Activated CD4-positive, alpha-beta memory T cell treated with anti-CD3 and anti-CD28 coated beads for 36 hours (primary cell): ENCODE measurements at regions of chr6 and their contacts with region 1.

Region 1: GRCh38 chr6:16657768-16658167 is 103.5 kb downstream of the ATXN1 start:
- DNase-seq: no peak
- H3K4me3 Mint-ChIP-seq: peak overlapping the region; percentile 60
- H3K27ac Mint-ChIP-seq: peak overlapping the region; percentile 87
- H3K4me1 Mint-ChIP-seq: peaks cover 80% of the 10 kb centered on the region
- H3K27me3 Mint-ChIP-seq: no peaks in the 10 kb centered on the region

Region 2: GRCh38 chr6:16108921-16109658 is 548.7 kb before region 1 on chr6:
- CTCF ChIA-PET with region 1: no interaction called
- POLR2A ChIA-PET with region 1: no interaction called
- intact Hi-C with region 1: no loop called
- DNase-seq: no peak
- H3K4me3 Mint-ChIP-seq: no peak overlapping the region
- H3K27ac Mint-ChIP-seq: no peak overlapping the region
- H3K4me1 Mint-ChIP-seq: no peaks in the 10 kb centered on the region
- H3K27me3 Mint-ChIP-seq: peaks cover 2% of the 10 kb centered on the region

Region 3: GRCh38 chr6:16319813-16320532 is 337.8 kb before region 1 on chr6:
- CTCF ChIA-PET with region 1: no interaction called
- POLR2A ChIA-PET with region 1: no interaction called
- intact Hi-C with region 1: loop called (anchors 5 kb)
- DNase-seq: peak; percentile 81
- H3K4me3 Mint-ChIP-seq: peak overlapping the region; percentile 50
- H3K27ac Mint-ChIP-seq: peak overlapping the region; percentile 84
- H3K4me1 Mint-ChIP-seq: peaks cover 82% of the 10 kb centered on the region
- H3K27me3 Mint-ChIP-seq: no peaks in the 10 kb centered on the region

Region 4: GRCh38 chr6:16471222-16471909 is 186.4 kb before region 1 on chr6:
- CTCF ChIA-PET with region 1: no interaction called
- POLR2A ChIA-PET with region 1: interaction called, 3 read pairs
- intact Hi-C with region 1: loop called (anchors 2 kb)
- DNase-seq: no peak
- H3K4me3 Mint-ChIP-seq: no peak overlapping the region
- H3K27ac Mint-ChIP-seq: peak overlapping the region; percentile 69
- H3K4me1 Mint-ChIP-seq: peaks cover 88% of the 10 kb centered on the region
- H3K27me3 Mint-ChIP-seq: no peaks in the 10 kb centered on the region

Region 5: DNA sequence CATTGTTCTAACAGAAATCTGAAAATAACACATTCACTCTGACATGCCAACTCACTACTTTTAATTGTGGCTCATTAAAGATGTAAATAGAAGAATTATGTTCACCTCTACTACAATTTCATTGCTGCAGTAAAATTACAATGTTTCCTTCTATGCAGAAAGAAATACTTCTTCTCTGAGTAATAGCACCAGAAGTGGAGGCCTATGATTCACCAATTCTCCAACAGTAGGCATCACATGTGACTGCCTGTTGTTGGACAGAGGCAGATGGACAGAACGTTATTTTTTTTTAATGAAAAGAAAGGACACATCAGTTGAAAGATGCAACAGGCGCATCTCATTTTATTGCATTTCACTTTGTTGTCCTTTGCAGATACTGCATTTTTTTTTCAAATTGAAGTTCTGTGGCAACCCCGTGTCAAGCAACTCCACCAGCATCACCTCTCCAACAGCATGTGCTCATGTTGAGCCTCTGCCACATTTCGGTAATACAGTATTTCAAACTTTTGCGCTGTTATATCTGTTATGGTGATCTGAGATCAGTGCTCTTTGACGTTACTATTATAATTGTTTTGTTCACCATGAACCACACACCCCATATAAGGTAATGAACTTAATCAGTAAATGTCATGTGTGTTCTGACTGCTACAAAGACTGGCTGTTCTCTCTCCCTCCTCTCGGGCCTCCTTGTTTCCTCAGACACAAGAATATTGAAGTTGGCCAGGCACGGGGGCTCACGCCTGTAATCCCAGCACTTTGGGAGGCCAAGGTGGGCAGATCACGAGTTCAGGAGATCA is 17.9 kb before region 1 on chr6:
- CTCF ChIA-PET with region 1: interaction called, 3 read pairs
- POLR2A ChIA-PET with region 1: interaction called, 3 read pairs
- intact Hi-C with region 1: loop called (anchors 2 kb)
- DNase-seq: no peak
- H3K4me3 Mint-ChIP-seq: no peak overlapping the region
- H3K27ac Mint-ChIP-seq: no peak overlapping the region
- H3K4me1 Mint-ChIP-seq: peaks cover 46% of the 10 kb centered on the region
- H3K27me3 Mint-ChIP-seq: no peaks in the 10 kb centered on the region

Region 6: GRCh38 chr6:16690608-16691198 is 32.9 kb after region 1 on chr6:
- CTCF ChIA-PET with region 1: interaction called, 4 read pairs
- POLR2A ChIA-PET with region 1: interaction called, 9 read pairs
- intact Hi-C with region 1: loop called (anchors 1 kb)
- DNase-seq: peak; percentile 82
- H3K4me3 Mint-ChIP-seq: peak overlapping the region; percentile 51
- H3K27ac Mint-ChIP-seq: peak overlapping the region; percentile 90
- H3K4me1 Mint-ChIP-seq: peaks cover 93% of the 10 kb centered on the region
- H3K27me3 Mint-ChIP-seq: no peaks in the 10 kb centered on the region

Region 7: DNA sequence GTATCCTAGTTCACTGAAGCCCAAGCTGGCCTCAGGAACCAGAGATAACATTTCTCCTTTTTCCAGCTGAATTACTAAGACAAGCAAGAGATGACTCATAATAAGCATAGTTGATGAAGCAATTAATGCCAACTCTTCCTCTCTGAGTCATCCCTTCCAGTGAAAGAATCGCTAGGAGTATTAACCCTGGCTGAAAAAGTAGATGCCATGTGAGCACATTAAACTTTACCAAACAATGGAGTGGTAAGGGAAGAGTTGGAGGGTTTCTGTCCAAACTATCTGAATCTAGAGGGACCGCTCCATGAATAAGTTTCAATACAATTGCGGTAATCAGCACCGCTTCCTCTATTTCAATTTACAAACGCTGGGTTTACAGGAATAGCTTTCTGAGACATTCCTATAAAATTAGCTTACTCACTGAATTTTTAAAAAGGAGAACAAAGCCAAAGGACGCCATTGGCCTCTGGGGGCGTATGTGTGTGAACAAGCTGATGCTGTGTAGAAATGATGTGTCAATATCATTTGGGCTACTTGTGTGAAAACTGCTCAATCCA is 55.2 kb after region 1 on chr6:
- CTCF ChIA-PET with region 1: no interaction called
- POLR2A ChIA-PET with region 1: interaction called, 4 read pairs
- intact Hi-C with region 1: loop called (anchors 1 kb)
- DNase-seq: peak; percentile 62
- H3K4me3 Mint-ChIP-seq: peak overlapping the region; percentile 64
- H3K27ac Mint-ChIP-seq: peak overlapping the region; percentile 92
- H3K4me1 Mint-ChIP-seq: peaks cover 70% of the 10 kb centered on the region
- H3K27me3 Mint-ChIP-seq: no peaks in the 10 kb centered on the region

Region 8: GRCh38 chr6:16894301-16894700 is 236.5 kb after region 1 on chr6:
- CTCF ChIA-PET with region 1: no interaction called
- POLR2A ChIA-PET with region 1: no interaction called
- intact Hi-C with region 1: no loop called
- DNase-seq: no peak
- H3K4me3 Mint-ChIP-seq: no peak overlapping the region
- H3K27ac Mint-ChIP-seq: no peak overlapping the region
- H3K4me1 Mint-ChIP-seq: no peaks in the 10 kb centered on the region
- H3K27me3 Mint-ChIP-seq: peaks cover 8% of the 10 kb centered on the region